ENCODE measurements at regions of chr6 and their contacts with region 1.

Region 1: DNA sequence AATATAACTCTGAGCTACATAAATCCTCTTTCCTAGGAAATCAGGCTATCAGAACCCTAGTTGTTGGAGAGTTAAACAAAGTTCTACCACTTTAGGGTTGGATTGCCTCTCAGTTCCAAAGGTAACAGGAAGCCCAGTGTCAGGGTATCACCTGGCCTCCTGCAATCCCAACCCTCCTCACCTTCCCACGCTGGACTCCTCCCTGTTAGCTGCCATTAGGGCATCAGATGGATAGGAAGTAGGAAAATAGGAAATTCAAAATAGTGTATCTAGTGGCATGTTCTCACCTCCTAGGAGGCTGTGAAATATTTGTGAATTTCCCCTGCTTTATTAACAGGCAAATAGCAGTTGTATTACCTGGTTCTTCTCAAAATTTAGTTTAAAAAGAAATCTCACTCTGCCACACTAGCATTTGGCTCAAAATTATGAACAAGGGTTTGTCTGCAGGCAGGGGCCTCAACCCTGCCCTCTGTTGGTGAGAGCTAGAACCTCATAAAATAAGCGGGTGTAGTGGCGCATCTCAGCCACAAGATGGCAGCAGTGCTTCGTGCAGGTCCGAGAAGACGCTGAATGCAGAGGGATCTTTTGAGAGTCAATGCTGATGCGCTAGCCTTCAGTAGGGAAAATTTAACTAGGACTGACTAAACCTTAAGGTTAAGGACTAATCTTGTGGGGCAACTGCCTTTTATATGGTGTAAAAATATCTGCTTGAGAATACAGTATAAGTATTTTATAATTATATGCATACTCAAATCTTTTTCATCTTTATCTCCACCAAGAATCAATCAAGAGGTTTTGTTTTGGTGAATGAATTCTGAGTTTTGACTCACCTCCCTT is 209.8 kb upstream of the KCNQ5 start:
- DNase-seq: peak; percentile 87

Region 2: DNA sequence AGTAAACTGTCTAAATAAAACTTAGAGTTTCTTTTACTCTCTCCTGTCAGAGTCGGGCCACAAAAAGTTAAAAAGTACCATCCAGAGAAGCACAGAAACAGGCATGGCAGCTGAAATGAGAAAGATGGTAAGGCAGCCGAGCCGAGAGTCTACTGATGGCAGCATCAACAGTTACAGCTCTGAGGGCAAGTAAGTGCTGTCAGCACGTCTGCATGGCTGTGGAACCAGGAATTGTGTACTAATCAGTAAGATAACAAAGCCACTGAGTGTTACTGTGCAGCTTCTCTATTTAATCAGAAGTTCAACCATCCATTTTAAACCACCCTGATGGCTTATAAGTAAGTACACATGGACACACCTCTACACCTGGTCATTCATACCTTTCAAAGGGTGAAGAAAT is 21.5 kb before region 1 on chr6:
- intact Hi-C with region 1: no loop called
- DNase-seq: no peak

Region 3: GRCh38 chr6:73180763-73181619 is 768.9 kb after region 1 on chr6:
- intact Hi-C with region 1: loop called (anchors 5 to 10 kb)
- DNase-seq: no peak

Measured in posterior vena cava (tissue), 2 donors.